ENCODE measurements at regions of chrX and their contacts with region 1.

Region 1: GRCh38 chrX:85345523-85345922 is 33.9 kb downstream of the POF1B start:
- DNase-seq: no peak
- H3K4me3 ChIP-seq: no peak overlapping the region
- H3K27ac ChIP-seq: no peak overlapping the region
- H3K4me1 ChIP-seq: no peaks in the 10 kb centered on the region
- H3K27me3 ChIP-seq: no peaks in the 10 kb centered on the region
- CTCF ChIP-seq: no peak
- EP300 ChIP-seq: no peak
- POLR2A ChIP-seq: no peak

Region 2: GRCh38 chrX:85544609-85545008 is 199.1 kb after region 1 on chrX:
- in situ Hi-C with region 1: no loop called
- intact Hi-C with region 1: no loop called
- DNase-seq: no peak
- H3K4me3 ChIP-seq: no peak overlapping the region
- H3K27ac ChIP-seq: no peak overlapping the region
- H3K4me1 ChIP-seq: no peaks in the 10 kb centered on the region
- H3K27me3 ChIP-seq: no peaks in the 10 kb centered on the region
- CTCF ChIP-seq: peak; percentile 32 to 54 (median 34)
- EP300 ChIP-seq: no peak
- POLR2A ChIP-seq: no peak

Region 3: DNA sequence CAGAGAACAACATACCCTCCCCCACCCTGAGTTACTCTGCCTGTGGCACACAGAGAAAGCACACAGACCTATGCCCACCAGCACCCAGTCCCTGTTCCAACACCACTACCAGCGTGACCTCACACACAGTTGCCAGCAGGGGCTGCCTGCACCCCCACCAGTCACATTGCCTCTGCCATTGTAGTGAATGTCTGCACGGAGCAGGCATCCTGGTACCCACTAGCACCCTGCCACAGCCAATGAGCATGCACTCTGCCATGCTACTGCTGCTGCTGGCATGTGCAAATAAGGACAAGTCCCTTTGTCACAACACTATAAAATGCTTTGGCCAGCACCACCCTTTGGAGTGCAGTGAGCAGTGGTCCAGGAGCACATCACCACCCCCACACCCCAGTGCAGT is 849.8 kb after region 1 on chrX:
- in situ Hi-C with region 1: no loop called
- intact Hi-C with region 1: loop called (anchors 10 kb)
- DNase-seq: no peak
- H3K4me3 ChIP-seq: no peak overlapping the region
- H3K27ac ChIP-seq: no peak overlapping the region
- H3K4me1 ChIP-seq: no peaks in the 10 kb centered on the region
- H3K27me3 ChIP-seq: no peaks in the 10 kb centered on the region
- CTCF ChIP-seq: no peak
- EP300 ChIP-seq: no peak
- POLR2A ChIP-seq: no peak